ENCODE measurements at regions of chr15 and their contacts with region 1.

Region 1: DNA sequence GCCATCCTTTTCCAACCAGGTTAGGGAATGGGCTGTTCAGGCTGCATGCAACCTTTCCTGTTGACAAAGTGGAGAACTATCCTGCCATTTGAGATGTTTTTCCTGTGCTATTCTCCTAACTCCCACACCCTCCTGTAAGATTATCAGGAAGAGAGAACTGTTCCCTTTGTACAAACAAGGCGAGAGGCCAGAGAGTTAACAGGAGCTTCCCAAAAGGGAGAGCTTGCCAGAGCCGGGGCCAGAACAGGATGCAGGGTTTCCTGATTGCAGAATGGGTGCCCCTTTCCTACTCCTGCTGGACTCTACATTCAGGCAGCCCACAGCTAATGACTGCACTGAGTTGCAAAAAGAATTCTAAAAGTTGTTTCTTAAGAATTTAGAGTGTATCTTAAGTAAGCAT is 17.1 kb downstream of the PML start:
- DNase-seq: no peak
- H3K4me3 Mint-ChIP-seq: no peak overlapping the region
- H3K27ac Mint-ChIP-seq: no peak overlapping the region
- H3K4me1 Mint-ChIP-seq: peaks cover 51% of the 10 kb centered on the region
- H3K27me3 Mint-ChIP-seq: no peaks in the 10 kb centered on the region

Region 2: DNA sequence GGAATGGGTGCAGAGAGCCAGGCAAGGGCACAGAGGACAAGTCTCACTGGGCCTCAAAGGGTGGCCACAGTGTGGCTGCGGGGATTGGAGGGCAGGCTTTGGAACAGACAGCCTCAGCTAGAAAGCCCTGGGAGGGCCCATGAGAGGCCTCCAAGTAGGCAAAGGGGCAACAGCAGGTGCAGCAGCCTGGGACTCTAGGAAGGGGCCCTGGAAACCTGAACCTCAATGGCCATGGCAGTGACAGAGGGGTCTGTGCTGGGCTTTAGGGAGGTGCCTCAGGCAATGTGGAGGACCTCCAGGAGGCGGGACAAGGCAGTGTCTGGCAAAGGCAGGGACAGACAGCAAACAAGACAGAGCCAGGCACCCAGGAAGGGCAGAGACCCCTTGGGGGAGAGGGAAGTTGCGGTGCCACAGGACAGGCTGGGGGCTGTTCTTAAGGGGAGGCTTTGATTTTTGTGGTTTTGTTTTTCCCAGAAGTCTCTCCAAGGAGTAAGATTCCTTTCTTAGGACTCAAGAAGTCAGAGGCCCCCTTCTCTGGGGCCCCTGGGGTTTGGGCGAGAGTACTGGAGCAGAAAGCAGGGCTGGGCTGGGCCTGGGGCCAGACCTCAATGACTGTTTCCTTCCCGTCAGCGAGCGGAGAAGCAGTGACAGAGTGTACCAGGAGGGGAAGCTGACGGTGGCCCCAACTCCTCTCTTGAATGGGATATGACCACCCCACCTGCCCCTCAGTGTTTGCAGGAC is 29.2 kb before region 1 on chr15:
- CTCF ChIA-PET with region 1: no interaction called
- POLR2A ChIA-PET with region 1: interaction called, 3 read pairs
- intact Hi-C with region 1: loop called (anchors 2 kb)
- DNase-seq: peak; percentile 73
- H3K4me3 Mint-ChIP-seq: peak overlapping the region; percentile 52
- H3K27ac Mint-ChIP-seq: peak overlapping the region; percentile 82
- H3K4me1 Mint-ChIP-seq: peaks cover 22% of the 10 kb centered on the region
- H3K27me3 Mint-ChIP-seq: no peaks in the 10 kb centered on the region

Region 3: GRCh38 chr15:73991726-73992593 is 19.6 kb before region 1 on chr15 and contains the start of gene STOML1:
- CTCF ChIA-PET with region 1: interaction called, 19 read pairs
- POLR2A ChIA-PET with region 1: interaction called, 22 read pairs
- intact Hi-C with region 1: loop called (anchors 1 kb)
- DNase-seq: peak; percentile 97
- H3K4me3 Mint-ChIP-seq: peak within 1 kb of the TSS; percentile 80
- H3K27ac Mint-ChIP-seq: peak within 1 kb of the TSS; percentile 70
- H3K4me1 Mint-ChIP-seq: peaks cover 30% of the 10 kb centered on the region
- H3K27me3 Mint-ChIP-seq: no peaks in the 10 kb centered on the region
- total RNA-seq, gene STOML1: 7.1 to 10.1 TPM

Region 4: GRCh38 chr15:74044267-74045110 is 32.9 kb after region 1 on chr15:
- CTCF ChIA-PET with region 1: interaction called, 13 read pairs
- POLR2A ChIA-PET with region 1: no interaction called
- intact Hi-C with region 1: no loop called
- DNase-seq: no peak
- H3K4me3 Mint-ChIP-seq: no peak overlapping the region
- H3K27ac Mint-ChIP-seq: no peak overlapping the region
- H3K4me1 Mint-ChIP-seq: peaks cover 8% of the 10 kb centered on the region
- H3K27me3 Mint-ChIP-seq: no peaks in the 10 kb centered on the region